ENCODE measurements at regions of chr11 and their contacts with region 1.

Region 1: DNA sequence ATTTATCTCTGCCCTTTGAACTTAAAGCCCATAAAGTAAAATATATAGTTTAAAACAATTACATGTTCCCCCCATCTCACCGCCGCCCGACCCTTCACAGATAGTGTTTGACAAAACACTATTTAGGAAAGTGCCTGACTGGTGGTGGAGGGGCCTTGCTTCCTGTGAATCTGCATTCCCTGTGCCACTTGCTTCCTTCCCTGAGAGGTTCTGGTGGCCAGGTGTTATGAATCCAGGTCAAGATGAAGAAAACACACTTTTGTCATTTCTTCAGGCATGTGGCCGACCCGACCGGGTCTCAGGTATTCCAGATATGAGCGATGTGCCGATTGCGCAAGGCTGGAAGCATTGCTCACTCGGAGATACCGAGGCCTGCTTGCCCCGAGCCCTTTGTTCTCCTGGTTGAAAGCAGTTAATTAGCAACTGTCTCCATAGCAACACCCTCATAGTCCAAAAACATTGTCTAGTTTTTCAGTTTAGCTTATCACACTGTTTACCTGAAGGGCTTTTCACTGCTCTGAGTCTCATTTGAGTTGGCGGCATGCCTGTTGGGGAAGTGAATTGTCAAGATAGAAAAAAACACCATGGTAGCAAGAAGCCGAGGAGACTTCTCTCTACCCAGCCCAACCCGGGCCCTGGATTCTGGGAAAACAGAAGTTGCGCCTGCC is 128.3 kb downstream of the TEAD1 start:
- DNase-seq: peak; percentile 70 to 90 (median 87)
- ATAC-seq: peak; percentile 71
- H3K4me3 ChIP-seq: no peak overlapping the region
- H3K27ac ChIP-seq: peak overlapping the region; percentile 71 to 72
- H3K4me1 ChIP-seq: peaks cover 16 to 20% of the 10 kb centered on the region in 2 donors
- H3K27me3 ChIP-seq: peaks cover 0 to 6% of the 10 kb centered on the region in 2 donors
- CTCF ChIP-seq: no peak

Region 2: DNA sequence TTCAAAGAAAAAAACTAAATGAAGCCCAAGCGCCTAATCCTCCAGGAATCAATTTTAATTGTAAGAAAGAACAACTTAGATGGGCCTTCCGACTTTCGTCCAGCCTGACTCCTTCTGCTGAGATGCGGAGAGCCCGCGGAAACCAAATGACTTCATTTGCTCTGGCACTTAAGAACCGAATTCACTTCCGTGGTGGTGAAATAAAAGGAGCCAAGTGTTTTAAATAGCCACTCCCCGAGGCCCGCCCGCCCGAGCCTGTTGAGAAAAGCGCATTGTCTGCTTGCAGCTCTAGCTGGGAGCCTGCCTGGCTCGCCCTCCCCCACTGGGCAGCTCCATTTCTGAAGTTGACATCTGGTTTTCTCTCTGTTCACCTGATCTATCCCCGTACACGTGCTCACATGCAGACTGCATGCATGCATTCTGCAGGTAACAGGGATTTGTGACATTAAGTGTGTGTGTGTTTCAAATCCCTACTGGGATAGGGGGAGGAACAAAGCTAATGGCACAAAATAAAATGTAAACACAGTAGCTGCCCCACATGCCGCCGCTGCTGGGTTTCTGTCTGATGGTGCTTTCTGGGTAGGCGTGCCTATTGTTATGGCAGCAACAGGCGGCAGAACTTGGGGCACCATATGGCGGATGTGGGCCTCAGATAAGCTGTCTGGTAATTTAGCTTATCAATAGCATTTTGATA is 122.2 kb before region 1 on chr11:
- intact Hi-C with region 1: loop called in 1 of 2 experiments (anchors 10 kb)
- DNase-seq: peak; percentile 66 to 89 (median 84)
- ATAC-seq: peak; percentile 88
- H3K4me3 ChIP-seq: no peak overlapping the region
- H3K27ac ChIP-seq: peak overlapping the region in 1 of 2 donors; percentile 63
- H3K4me1 ChIP-seq: peaks cover 10 to 35% of the 10 kb centered on the region in 2 donors
- H3K27me3 ChIP-seq: peaks cover 0 to 64% of the 10 kb centered on the region in 2 donors
- CTCF ChIP-seq: no peak

Measured in left lung (tissue), 14 donors.